ENCODE measurements at regions of chr3 and their contacts with region 1.

Region 1: GRCh38 chr3:31105438-31106077 is 211.1 kb upstream of the GADL1 start:
- DNase-seq: no peak
- H3K4me3 Mint-ChIP-seq: no peak overlapping the region
- H3K27ac Mint-ChIP-seq: no peak overlapping the region
- H3K4me1 Mint-ChIP-seq: peaks cover 42% of the 10 kb centered on the region
- H3K27me3 Mint-ChIP-seq: peaks cover 5% of the 10 kb centered on the region

Region 2: DNA sequence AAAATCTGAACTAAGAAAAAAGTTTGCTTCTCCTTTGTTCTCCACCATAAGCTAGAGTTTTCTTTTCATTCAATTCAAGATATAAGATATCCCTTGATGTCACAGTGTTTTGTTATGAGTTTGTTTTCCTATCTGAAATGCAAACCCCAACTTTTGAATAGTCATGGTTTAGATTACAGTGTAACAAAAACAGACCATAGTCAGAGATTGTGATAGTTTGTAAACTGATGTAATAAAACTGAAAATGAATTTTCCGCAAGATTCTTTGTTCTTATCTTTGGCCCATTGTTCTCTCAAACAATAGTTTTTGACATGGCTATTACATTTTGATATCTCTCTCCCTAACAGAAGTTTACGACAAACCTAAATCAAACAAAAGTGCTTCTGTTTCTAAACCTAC is 89.4 kb before region 1 on chr3:
- intact Hi-C with region 1: loop called (anchors 1 kb)
- DNase-seq: no peak
- H3K4me3 Mint-ChIP-seq: no peak overlapping the region
- H3K27ac Mint-ChIP-seq: no peak overlapping the region
- H3K4me1 Mint-ChIP-seq: peaks cover 15% of the 10 kb centered on the region
- H3K27me3 Mint-ChIP-seq: peaks cover 9% of the 10 kb centered on the region

Region 3: GRCh38 chr3:31077021-31077601 is 28.4 kb before region 1 on chr3:
- intact Hi-C with region 1: loop called (anchors 1 kb)
- DNase-seq: peak; percentile 18
- H3K4me3 Mint-ChIP-seq: no peak overlapping the region
- H3K27ac Mint-ChIP-seq: peak overlapping the region; percentile 52
- H3K4me1 Mint-ChIP-seq: peaks cover 34% of the 10 kb centered on the region
- H3K27me3 Mint-ChIP-seq: peaks cover 7% of the 10 kb centered on the region

Region 4: DNA sequence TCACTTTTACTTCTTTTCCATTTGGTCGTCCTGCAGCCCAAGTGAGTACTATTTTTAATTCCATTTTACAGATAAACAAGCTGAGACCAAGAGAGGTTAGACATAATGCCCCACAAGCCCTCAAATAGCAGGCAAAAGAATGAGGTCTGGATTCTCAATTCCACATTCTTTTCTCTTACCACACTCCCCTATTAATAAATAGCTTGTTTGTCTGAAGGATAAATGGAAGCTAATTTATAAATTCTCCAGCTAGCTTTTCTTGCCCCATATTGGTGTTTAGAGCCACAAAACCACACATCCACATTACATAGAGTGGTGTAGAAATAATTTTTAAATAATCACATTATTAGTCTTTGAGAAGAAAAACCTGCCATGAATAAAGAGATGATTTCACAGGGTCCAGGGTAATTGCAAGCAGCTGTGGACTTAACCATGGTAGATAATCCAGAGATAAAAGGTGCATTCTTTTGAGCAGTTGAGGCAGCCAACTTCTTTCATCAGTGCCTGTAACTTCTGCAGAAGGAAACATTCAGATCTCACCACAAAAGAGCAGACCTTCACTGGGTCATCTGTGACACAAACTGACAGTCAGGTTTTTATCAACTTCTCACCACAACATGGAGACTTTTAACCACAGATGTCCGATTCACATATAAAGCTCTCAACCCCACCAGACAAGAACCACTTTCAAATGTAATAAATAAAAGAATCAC is 113.7 kb after region 1 on chr3:
- intact Hi-C with region 1: loop called (anchors 5 kb)
- DNase-seq: no peak
- H3K4me3 Mint-ChIP-seq: no peak overlapping the region
- H3K27ac Mint-ChIP-seq: peak overlapping the region; percentile 19
- H3K4me1 Mint-ChIP-seq: peaks cover 78% of the 10 kb centered on the region
- H3K27me3 Mint-ChIP-seq: no peaks in the 10 kb centered on the region

Region 5: GRCh38 chr3:31472479-31473390 is 367.2 kb after region 1 on chr3:
- intact Hi-C with region 1: loop called (anchors 2 kb)
- DNase-seq: no peak
- H3K4me3 Mint-ChIP-seq: no peak overlapping the region
- H3K27ac Mint-ChIP-seq: no peak overlapping the region
- H3K4me1 Mint-ChIP-seq: peaks cover 14% of the 10 kb centered on the region
- H3K27me3 Mint-ChIP-seq: peaks cover 27% of the 10 kb centered on the region

Measured in activated T-helper 2 cell treated with anti-CD3 and anti-CD28 coated beads, Interferon-gamma antibody, Interleukin-2, Interleukin-4, amounts not matched to agents 10 μg/mL and 5 μg/mL and 100 μg/mL, durations not matched to agents 14 hours and 24 hours and 36 hours (primary cell).